Activated T-helper 1 cell treated with anti-CD3 and anti-CD28 coated beads, Interleukin-12 subunit alpha, Interleukin-12 subunit beta, Interleukin-2, Interleukin-4 antibody, amounts not matched to agents 30 ng/mL and 10 ng/mL and 1 ng/mL, durations not matched to agents 14 hours and 24 hours and 36 hours (primary cell): ENCODE measurements at regions of chr11 and their contacts with region 1.

Region 1: DNA sequence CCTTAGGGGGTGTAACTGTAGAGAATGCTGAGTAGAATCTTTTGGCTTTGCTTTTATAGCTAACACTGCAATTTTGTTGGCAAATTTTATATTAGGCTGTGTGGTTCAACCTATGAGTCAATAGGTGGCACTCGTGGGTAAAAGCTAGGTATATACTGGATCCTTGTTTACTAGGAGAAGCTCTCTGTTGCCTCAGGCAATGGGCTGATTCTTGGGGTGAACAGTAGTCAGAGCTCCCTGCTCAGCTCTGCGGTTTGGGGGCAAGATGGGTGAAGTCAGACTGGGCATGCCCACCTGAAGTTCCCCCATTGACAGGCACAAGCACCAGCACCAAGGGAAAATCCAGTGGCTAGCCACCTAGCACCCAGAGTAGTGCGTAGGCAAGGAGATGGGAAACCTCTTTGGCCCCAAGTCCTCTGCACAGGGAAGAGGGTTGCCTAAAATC is 238.7 kb downstream of the FAM181B start:
- DNase-seq: no peak
- H3K4me3 Mint-ChIP-seq: no peak overlapping the region
- H3K27ac Mint-ChIP-seq: no peak overlapping the region
- H3K4me1 Mint-ChIP-seq: no peaks in the 10 kb centered on the region
- H3K27me3 Mint-ChIP-seq: no peaks in the 10 kb centered on the region

Region 2: DNA sequence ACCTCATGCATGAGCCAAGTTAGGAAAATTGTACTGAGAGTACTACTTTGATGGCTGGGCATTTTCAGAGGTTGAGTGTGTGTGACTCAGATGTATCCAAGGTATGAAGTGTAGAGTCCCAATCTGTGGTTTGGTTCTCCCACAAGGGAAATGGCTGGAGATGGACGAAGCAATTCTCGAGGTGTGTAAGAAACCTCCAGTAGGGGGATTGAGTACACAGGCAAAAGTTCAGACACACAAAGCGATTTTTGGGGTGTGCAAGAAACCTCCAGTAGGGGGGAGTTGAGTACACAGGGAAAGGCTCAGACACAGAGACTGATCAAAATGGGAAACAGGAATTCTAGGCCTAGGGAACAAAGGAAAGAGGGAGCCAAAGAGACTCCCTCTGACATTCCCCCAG is 1297.6 kb before region 1 on chr11:
- intact Hi-C with region 1: loop called (anchors 5 kb)
- DNase-seq: no peak
- H3K4me3 Mint-ChIP-seq: no peak overlapping the region
- H3K27ac Mint-ChIP-seq: no peak overlapping the region
- H3K4me1 Mint-ChIP-seq: no peaks in the 10 kb centered on the region
- H3K27me3 Mint-ChIP-seq: no peaks in the 10 kb centered on the region